Prostate gland (tissue), 2 donors: ENCODE measurements at regions of chr2 and their contacts with region 1.

Region 1: DNA sequence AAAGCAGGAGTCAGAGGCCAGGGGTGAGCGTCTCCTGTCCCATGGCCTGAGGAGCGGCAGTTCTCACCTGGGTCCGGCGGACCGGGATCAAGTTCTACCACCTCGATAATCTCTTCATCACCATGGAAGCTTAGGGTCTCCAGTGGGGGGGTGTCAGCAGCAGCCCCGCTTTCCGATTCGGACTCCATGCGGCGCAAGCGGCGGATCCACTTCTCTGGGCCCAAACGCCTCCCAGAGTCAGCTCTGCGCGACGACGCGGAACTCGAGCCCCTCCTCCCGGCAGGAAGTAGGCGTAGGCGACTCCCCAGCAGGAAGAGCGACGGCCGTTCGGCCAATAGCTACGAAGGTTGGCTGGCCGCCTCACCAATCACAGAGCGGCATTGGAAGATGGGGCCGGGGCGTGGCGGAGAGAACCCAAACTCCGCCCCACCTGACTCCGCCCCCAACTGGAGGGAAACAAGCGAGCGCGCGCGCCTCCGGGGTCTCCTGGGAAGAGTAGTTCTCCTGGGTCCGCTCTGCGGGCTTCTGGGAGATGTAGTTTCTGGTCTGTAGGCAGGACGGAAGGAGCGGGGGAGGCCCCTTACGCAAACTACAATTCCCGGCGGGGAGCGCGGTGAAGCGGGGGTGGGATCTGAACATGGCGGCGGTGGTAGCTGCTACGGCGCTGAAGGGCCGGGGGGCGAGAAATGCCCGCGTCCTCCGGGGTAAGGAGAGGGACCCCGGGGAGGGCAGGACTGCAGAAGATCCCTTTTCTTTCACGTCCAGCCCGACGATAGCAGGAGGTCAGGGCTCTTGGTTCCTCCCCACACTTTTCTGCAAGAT is at the starts of genes AAMP and PNKD:
- DNase-seq: peak; percentile 100
- H3K4me3 ChIP-seq: peak within 1 kb of the TSS; percentile 69 to 91
- H3K27ac ChIP-seq: peak within 1 kb of the TSS; percentile 78 to 86
- H3K4me1 ChIP-seq: peaks cover 12% of the 10 kb centered on the region
- H3K27me3 ChIP-seq: no peaks in the 10 kb centered on the region
- CTCF ChIP-seq: peak; percentile 24 to 59 (median 39)
- POLR2A ChIP-seq: peak; percentile 94
- total RNA-seq, gene AAMP: 217 to 237 TPM
- total RNA-seq, gene PNKD: 103 to 145 TPM

Region 2: GRCh38 chr2:218051908-218052307 is 218.2 kb before region 1 on chr2:
- intact Hi-C with region 1: no loop called
- DNase-seq: no peak
- H3K4me3 ChIP-seq: no peak overlapping the region
- H3K27ac ChIP-seq: no peak overlapping the region
- H3K4me1 ChIP-seq: no peaks in the 10 kb centered on the region
- H3K27me3 ChIP-seq: no peaks in the 10 kb centered on the region
- CTCF ChIP-seq: no peak
- POLR2A ChIP-seq: no peak

Region 3: GRCh38 chr2:218168635-218169462 is 101.3 kb before region 1 on chr2:
- intact Hi-C with region 1: no loop called
- DNase-seq: no peak
- H3K4me3 ChIP-seq: no peak overlapping the region
- H3K27ac ChIP-seq: no peak overlapping the region
- H3K4me1 ChIP-seq: no peaks in the 10 kb centered on the region
- H3K27me3 ChIP-seq: no peaks in the 10 kb centered on the region
- CTCF ChIP-seq: peak in 2 of 4 experiments; percentile 35 to 44
- POLR2A ChIP-seq: no peak

Region 4: GRCh38 chr2:218186355-218186766 is 83.7 kb before region 1 on chr2:
- intact Hi-C with region 1: loop called (anchors 5 kb)
- DNase-seq: peak; percentile 55
- H3K4me3 ChIP-seq: no peak overlapping the region
- H3K27ac ChIP-seq: no peak overlapping the region
- H3K4me1 ChIP-seq: no peaks in the 10 kb centered on the region
- H3K27me3 ChIP-seq: no peaks in the 10 kb centered on the region
- CTCF ChIP-seq: peak; percentile 43 to 86 (median 75)
- POLR2A ChIP-seq: no peak

Region 5: GRCh38 chr2:218216674-218217359 is 53.3 kb before region 1 on chr2 and contains the start of gene ARPC2:
- intact Hi-C with region 1: loop called (anchors 5 kb)
- DNase-seq: peak; percentile 93
- H3K4me3 ChIP-seq: peak within 1 kb of the TSS; percentile 95 to 97
- H3K27ac ChIP-seq: peak within 1 kb of the TSS; percentile 88 to 90
- H3K4me1 ChIP-seq: peaks cover 15% of the 10 kb centered on the region
- H3K27me3 ChIP-seq: no peaks in the 10 kb centered on the region
- CTCF ChIP-seq: peak in 2 of 4 experiments; percentile 54 to 71
- POLR2A ChIP-seq: peak; percentile 94
- total RNA-seq, gene ARPC2: 182 to 207 TPM

Region 6: DNA sequence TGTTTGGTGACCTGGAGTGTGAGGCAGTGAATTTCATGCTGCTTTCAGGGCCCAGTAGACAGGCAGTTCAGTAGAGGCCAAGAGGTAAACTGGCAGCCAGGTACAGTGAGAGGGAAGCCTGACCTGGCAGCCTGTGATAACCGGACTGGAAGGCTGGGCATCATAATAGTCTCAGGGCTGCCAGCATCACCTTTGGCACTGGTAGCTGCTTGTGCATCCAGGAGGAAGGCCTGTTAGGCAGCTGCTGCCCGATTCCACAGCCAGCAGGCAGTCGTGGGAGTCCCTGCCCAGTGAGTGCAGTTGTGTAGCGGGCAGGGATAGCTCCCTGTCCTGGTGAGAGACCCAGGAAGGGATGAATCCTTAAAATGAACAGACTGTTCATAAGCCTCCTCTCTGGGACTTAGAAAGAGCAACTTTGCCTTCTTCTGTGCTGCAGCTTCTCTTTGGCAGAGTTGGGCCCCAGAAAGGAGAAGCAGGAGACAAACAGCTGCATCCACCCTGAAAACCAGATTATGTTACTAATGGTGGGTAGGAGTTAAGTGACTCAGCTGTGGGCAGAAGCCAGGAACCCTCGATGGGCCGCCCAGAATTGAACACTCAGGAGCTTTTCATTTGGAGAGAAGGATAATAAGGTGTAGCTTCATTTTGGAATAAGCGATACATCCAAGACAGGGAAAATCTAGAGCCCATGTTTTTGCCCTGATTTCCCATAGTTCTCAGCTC is 17.4 kb before region 1 on chr2:
- intact Hi-C with region 1: no loop called
- DNase-seq: no peak
- H3K4me3 ChIP-seq: no peak overlapping the region
- H3K27ac ChIP-seq: no peak overlapping the region
- H3K4me1 ChIP-seq: no peaks in the 10 kb centered on the region
- H3K27me3 ChIP-seq: no peaks in the 10 kb centered on the region
- CTCF ChIP-seq: no peak
- POLR2A ChIP-seq: no peak

Region 7: DNA sequence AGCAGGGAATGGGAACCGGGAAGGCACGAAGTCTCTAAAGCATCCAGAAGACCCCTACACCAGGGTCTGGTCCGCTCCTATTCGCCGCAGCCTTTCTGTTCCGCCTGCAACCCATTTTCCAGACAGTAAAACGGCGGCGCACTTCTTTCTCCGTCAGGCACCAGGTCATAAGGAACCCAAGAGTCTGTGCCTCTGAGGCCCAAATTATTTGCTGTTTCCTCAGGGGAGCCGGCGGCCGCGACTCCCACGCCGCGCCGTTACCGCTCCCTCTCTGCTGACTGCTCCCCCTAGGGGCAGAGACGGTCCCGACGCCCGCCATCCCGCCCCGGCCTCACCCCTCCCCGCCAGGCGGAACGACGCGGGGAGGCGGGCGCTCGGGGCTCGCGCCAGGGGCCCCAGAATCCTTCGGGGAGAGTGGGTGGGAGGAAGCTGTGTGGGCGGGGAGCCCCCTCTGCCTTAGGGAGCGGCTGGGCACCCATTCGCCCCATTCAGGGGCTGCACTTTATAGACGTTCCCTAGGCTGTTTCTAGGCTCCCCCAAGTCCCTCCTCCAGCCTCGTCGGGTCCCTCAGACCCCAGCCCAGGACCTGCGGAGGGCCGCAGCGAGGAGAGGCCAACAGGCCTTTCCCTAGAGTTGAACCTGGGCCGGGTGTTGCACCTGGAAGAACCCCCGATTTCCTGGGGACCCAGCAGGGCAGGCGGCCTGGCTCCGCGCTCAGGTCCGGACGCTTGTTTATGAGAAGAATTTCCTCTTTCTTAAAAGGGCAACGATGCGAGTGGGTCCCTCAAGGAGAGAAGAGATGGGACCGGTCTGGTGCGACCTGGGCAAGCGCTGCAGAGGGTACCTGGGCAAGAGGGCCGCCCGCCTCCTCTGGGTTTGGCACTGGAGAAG is 125.9 kb after region 1 on chr2:
- intact Hi-C with region 1: loop called (anchors 5 kb)
- DNase-seq: peak; percentile 92
- H3K4me3 ChIP-seq: peak overlapping the region; percentile 99 to 100
- H3K27ac ChIP-seq: peak overlapping the region; percentile 99 to 100
- H3K4me1 ChIP-seq: peaks cover 3% of the 10 kb centered on the region
- H3K27me3 ChIP-seq: no peaks in the 10 kb centered on the region
- CTCF ChIP-seq: peak; percentile 82 to 99 (median 98)
- POLR2A ChIP-seq: peak; percentile 16

Region 8: DNA sequence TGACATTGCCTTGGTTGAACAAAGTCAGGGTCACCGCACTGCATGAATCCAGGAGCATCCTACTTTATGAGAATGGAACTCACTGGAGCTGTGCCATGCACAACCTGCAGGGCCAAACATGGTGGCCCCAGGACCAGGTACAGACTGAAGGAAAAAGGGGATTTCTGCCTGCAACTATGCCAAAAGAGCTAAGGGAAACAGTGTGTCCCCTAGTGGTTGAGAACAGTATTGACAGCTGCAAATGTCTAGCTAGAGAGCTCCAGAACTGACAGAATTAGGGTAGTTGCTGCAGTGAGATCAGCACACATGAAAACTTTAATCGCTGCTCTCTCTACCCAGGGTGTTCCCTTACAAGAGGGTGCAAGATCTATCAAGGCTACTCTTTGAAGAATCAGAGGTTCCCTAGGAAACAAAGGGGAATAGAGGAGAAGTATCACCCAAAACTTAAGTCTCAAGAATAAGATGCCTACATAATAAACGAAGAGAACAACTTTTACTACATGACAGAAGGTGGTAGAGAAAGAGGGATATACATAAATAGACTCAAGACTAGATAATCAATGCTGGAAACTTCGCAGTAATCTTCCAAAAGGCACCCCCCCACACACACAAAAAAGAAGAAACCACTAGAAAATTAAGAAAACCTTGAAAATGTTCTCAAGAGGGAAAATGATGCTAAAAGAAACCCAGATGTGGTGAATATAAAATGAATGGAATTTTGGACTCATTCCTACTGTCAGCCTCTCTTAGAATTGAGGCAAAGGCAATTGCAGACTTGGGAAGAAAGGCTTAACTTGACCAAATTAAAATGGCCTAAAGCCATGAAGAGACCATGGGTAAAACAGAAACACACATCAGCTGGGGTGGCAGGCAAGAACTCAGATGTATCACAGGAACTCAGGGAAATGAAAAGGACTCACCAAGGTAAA is 834.3 kb after region 1 on chr2:
- intact Hi-C with region 1: no loop called
- DNase-seq: no peak
- H3K4me3 ChIP-seq: no peak overlapping the region
- H3K27ac ChIP-seq: no peak overlapping the region
- H3K4me1 ChIP-seq: no peaks in the 10 kb centered on the region
- H3K27me3 ChIP-seq: no peaks in the 10 kb centered on the region
- CTCF ChIP-seq: peak in 3 of 4 experiments; percentile 31 to 53 (median 47)
- POLR2A ChIP-seq: no peak